T-cell (primary cell): ENCODE measurements at regions of chr15 and their contacts with region 1.

Region 1: GRCh38 chr15:57561041-57561711 is 30.5 kb upstream of the MYZAP start:
- DNase-seq: peak in 34 of 35 experiments; percentile 5 to 79 (median 44)
- ATAC-seq: peak; percentile 36 to 76 (median 70)
- H3K4me3 ChIP-seq: no peak overlapping the region
- H3K4me3 Mint-ChIP-seq: peak overlapping the region in 1 of 3 donors; percentile 36
- H3K27ac ChIP-seq: no peak overlapping the region
- H3K27ac Mint-ChIP-seq: no peak overlapping the region
- H3K4me1 ChIP-seq: peaks cover 9 to 18% of the 10 kb centered on the region in 2 experiments
- H3K4me1 Mint-ChIP-seq: peaks cover 32 to 48% (median 39%) of the 10 kb centered on the region in 3 donors
- H3K27me3 ChIP-seq: peaks cover 0 to 4% of the 10 kb centered on the region in 2 experiments
- H3K27me3 Mint-ChIP-seq: no peaks in the 10 kb centered on the region

Region 2: GRCh38 chr15:57861036-57861638 is 300.0 kb after region 1 on chr15:
- CTCF ChIA-PET with region 1: interaction called, 15 to 16 read pairs
- POLR2A ChIA-PET with region 1: no interaction called
- DNase-seq: peak in 13 of 35 experiments; percentile 2 to 72 (median 15)
- ATAC-seq: peak in 1 of 4 experiments; percentile 30
- H3K4me3 ChIP-seq: no peak overlapping the region
- H3K4me3 Mint-ChIP-seq: no peak overlapping the region
- H3K27ac ChIP-seq: no peak overlapping the region
- H3K27ac Mint-ChIP-seq: no peak overlapping the region
- H3K4me1 ChIP-seq: no peaks in the 10 kb centered on the region
- H3K4me1 Mint-ChIP-seq: no peaks in the 10 kb centered on the region
- H3K27me3 ChIP-seq: peaks cover 0 to 8% of the 10 kb centered on the region in 2 experiments
- H3K27me3 Mint-ChIP-seq: peaks cover 21 to 38% of the 10 kb centered on the region in 2 donors